ENCODE measurements at regions of chr17 and their contacts with region 1.

Region 1: DNA sequence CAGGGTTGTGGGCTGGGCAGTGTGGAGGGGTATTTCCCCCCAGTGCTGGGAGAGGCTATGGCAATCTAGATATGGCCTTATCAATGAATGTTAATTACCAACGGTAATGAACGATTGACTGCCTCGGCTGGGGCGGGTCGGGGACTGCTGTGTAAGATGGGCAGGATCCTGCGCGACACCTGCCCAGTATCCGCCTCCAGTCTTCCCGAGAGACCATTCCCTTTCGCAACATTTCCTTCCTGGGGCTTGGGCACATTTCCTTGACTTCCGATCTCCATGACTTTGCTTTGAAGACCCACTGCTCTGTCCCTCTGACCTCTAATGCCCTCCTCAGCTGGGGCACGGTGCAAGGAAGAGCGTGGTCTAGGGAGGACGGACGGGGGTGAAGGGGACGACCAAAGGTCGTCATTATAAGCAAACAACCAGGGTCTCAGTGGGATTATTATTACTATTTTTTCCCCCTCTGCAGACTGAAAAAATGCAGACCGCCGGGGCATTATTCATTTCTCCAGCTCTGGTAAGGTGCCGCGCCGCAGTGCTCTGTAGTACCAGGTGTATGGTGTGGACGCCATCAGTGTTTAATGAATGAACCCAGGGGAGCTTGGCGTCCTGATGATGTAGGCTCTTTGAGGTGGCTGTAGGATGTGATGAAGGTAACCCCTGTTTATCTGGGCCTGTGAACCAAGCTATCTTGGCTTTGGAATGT is 506 bp downstream of the ATP5MC1 start:
- DNase-seq: no peak
- ATAC-seq: peak; percentile 0
- H3K4me3 ChIP-seq: peak overlapping the region; percentile 80 to 95
- H3K27ac ChIP-seq: peak overlapping the region; percentile 97
- H3K4me1 ChIP-seq: peaks cover 18% of the 10 kb centered on the region
- H3K27me3 ChIP-seq: no peaks in the 10 kb centered on the region
- CTCF ChIP-seq: no peak

Region 2: DNA sequence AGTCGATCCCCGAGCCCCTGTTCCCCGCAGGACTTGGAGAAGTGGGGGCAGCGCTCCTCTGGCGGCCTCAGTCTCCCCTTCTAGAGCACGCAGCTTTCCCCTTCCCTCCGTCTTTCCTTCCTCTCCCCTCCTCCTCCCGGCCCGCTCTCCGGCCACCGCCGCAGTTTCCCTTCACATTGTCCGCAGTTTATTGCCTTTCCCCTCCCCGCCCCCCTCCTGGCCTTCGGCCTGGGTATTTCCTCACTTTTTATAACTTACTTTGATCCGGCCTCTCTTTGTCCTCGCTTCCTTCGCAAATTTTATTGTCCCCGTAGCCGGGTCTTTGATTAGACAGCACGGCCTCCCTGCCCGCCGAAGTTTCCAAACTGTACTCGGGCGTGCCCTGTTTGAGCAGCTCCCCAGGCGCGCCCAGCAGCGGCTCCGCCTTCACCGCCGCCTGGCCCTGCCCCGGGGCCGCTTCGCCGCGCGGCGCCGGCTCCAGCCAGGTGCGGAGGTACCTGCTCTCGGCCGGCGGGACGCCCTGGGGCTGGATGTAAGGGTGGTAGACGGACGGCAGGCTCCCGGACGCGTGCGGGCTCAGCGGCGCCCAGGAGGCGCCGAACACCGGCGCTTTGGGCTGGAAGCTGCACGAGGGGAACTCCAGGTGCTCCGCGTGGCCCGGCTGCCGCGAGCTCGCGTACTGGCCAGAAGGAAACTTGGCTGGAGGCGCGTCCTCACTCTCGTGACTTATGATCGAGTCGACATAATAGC is 267.4 kb before region 1 on chr17:
- CTCF ChIA-PET with region 1: interaction called, 13 read pairs
- POLR2A ChIA-PET with region 1: interaction called, 3 read pairs
- in situ Hi-C with region 1: no loop called
- intact Hi-C with region 1: no loop called
- DNase-seq: no peak
- ATAC-seq: peak; percentile 73
- H3K4me3 ChIP-seq: peak overlapping the region; percentile 78 to 93
- H3K27ac ChIP-seq: peak overlapping the region; percentile 95
- H3K4me1 ChIP-seq: peaks cover 60% of the 10 kb centered on the region
- H3K27me3 ChIP-seq: no peaks in the 10 kb centered on the region
- CTCF ChIP-seq: no peak

Region 3: GRCh38 chr17:49016788-49017463 is 123.8 kb after region 1 on chr17:
- CTCF ChIA-PET with region 1: no interaction called
- POLR2A ChIA-PET with region 1: no interaction called
- in situ Hi-C with region 1: no loop called
- intact Hi-C with region 1: no loop called
- DNase-seq: no peak
- ATAC-seq: peak; percentile 36
- H3K4me3 ChIP-seq: no peak overlapping the region; a peak in 1 of 4 replicates
- H3K27ac ChIP-seq: no peak overlapping the region
- H3K4me1 ChIP-seq: peaks cover 34% of the 10 kb centered on the region
- H3K27me3 ChIP-seq: no peaks in the 10 kb centered on the region
- CTCF ChIP-seq: no peak

Region 4: DNA sequence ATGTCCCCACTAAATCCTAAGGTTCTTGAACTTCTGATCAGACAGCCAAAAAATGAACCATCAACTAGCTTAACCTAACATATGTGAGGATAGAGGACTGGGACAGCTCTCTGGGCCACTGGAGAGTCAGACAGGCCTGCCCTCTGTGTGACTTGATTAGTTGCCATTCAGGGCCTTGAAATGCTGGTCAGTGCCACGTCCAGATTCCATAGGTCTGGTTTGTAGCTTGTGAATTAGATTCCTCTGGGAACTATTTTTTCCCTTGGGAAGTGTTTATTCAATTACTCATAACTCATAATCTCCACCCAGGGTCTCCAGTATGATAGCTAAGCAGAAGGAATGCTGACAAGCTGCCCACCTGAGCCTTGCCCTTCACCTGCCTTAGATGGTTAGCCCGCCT is 152.3 kb after region 1 on chr17:
- CTCF ChIA-PET with region 1: no interaction called
- POLR2A ChIA-PET with region 1: no interaction called
- in situ Hi-C with region 1: no loop called
- intact Hi-C with region 1: no loop called
- DNase-seq: no peak
- ATAC-seq: peak; percentile 42; the same call in 1 of the 2 replicates
- H3K4me3 ChIP-seq: no peak overlapping the region
- H3K27ac ChIP-seq: no peak overlapping the region
- H3K4me1 ChIP-seq: no peaks in the 10 kb centered on the region
- H3K27me3 ChIP-seq: no peaks in the 10 kb centered on the region
- CTCF ChIP-seq: no peak